ENCODE measurements at regions of chr17 and their contacts with region 1.

Region 1: DNA sequence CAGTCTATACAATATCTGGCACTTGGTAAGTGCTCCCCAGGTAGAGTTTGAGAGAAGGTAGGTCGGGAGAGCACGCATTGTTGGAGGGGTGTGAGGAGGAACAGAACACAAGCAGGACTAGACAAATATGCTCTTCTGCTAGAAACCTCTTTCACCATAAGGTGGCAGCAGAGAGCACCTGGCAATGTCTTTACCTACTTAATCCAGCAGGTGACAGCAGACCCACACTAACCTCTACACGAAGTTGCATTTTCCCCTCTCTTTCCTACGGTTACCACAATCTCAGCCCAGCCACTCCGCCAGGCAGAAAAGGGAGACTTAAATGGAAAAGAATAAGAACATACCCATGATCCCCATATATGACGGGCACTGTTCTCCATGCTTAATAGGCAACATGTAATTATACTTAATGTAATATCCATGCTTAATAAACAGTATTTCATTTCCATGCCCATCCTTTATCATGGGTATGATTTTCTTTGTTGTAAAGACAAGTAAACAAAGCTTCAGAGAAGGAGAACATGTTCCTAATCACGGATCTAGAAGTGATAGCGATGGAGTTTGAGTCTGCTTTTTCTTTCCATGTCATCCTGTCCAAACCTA is 55.1 kb upstream of the CCL2 start:
- DNase-seq: peak in 6 of 10 donors; percentile 32 to 88 (median 60)

Region 2: DNA sequence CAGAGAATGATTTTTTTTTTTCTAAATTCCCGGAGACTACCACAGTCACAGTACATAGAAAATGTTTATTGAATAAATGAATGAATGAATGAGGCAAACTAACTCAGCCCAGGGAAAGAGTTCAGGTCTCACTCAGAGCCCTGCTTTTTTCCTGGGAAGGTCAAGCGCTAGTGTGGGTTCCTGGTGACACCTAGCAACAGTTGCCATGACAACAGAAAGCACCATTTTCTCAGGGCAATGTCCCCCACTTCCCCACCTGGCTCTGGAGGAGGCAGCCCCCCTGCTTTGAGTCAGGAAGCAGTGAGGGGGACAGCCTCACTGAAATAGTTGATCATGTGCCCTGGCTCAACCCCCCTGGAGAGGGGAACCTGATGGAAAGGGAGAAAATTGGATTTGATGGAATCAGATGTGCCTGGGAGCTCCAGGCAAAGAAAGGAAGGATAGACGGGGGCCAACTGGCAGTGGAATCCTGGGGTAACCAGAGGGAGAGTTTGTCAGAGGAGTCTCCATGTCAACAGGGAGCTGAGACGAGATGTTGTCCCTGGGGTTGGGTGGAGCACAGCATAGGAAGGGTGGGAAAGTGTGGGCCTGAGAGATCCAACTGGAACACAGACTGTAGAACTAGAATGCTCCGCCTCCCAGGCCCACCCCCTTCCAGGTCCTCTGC is 187.2 kb before region 1 on chr17:
- intact Hi-C with region 1: no loop called
- DNase-seq: no peak

Region 3: GRCh38 chr17:34254651-34255380 is 54.8 kb after region 1 on chr17 and contains the start of gene CCL2:
- intact Hi-C with region 1: loop called (anchors 10 kb)
- DNase-seq: peak in 5 of 10 donors; percentile 36 to 87 (median 50)

Region 4: DNA sequence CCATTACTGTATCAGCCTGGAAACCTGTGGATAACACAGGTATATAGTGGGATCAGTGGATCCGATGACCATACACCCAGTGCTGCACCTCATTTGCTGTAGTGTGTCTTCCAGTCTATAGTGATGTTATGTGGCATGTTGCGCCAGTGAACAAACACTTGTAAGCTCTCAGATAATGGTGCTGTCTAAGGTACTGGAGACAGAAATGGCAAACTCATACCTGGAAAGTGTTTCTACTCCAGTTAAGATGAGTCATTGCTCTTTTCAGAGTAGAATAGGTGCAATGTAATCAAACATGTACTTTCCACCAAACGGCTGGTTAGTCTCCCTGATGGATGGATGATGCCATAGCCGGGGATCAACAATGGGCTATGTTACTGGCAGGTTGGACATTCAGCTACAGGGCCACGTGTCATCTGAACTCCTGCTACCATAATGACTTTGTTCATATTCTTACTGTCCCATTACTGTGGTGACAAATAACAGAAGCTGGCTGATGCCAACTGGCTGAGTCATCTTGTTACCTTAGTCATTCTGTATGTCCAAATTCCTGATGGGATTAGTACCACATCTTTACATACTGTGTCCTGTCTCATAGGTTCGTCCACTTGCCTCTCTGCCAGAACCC is 91.8 kb after region 1 on chr17:
- intact Hi-C with region 1: no loop called
- DNase-seq: no peak

Region 5: GRCh38 chr17:34306466-34306865 is 106.4 kb after region 1 on chr17:
- intact Hi-C with region 1: loop called (anchors 2 kb)
- DNase-seq: no peak

Region 6: GRCh38 chr17:34361478-34362061 is 161.5 kb after region 1 on chr17:
- intact Hi-C with region 1: loop called (anchors 1 kb)
- DNase-seq: peak; percentile 54 to 98 (median 86)

Region 7: DNA sequence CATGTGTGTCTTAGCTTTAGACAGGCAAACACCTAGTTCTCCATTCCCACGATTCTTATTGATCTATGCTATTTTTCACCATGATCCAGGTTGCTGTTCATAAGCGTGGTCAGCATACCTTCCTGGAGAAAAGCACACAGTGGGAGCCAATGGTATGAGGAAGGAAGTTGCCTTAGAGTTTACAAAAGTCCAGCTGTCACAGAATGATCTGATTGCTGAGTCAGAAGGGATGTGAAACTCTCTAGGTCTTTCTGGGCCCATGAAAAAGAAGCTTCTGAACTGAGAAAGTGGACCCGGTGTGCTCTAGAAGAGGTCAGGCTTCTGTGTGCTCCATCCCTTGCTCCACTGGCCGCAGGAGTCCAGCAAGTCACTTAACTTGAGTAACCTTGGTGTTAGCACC is 234.0 kb after region 1 on chr17:
- intact Hi-C with region 1: no loop called
- DNase-seq: no peak

Measured in posterior cingulate gyrus (tissue), 11 donors.